ENCODE measurements at regions of chr2 and their contacts with region 1.

Region 1: GRCh38 chr2:6443061-6443823 is 422.5 kb downstream of the CMPK2 start:
- DNase-seq: no peak
- ATAC-seq: no peak
- H3K4me3 ChIP-seq: no peak overlapping the region
- H3K27ac ChIP-seq: no peak overlapping the region
- H3K4me1 ChIP-seq: no peaks in the 10 kb centered on the region
- H3K27me3 ChIP-seq: no peaks in the 10 kb centered on the region

Region 2: DNA sequence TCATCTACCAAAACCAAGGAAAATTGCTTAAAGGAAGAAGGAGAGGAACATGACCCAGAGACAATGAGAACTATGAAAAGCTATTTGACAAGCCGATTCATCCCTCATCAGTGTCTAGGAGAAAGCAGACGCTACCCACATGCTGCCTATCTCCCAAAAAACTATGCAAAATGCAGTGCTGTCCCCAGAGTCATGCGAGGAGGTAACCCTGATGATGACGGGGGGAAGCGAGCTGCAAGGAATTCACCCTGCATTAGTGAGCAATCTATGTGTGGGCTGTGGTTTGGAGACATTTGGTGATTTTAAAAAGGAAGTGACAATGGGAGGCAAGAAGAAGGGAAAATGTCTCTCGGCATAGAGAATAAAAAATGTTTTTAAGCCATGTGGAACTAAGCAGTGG is 50.3 kb before region 1 on chr2:
- intact Hi-C with region 1: no loop called
- DNase-seq: no peak
- ATAC-seq: no peak
- H3K4me3 ChIP-seq: no peak overlapping the region
- H3K27ac ChIP-seq: no peak overlapping the region
- H3K4me1 ChIP-seq: no peaks in the 10 kb centered on the region
- H3K27me3 ChIP-seq: no peaks in the 10 kb centered on the region

Region 3: GRCh38 chr2:6423157-6423556 is 20.1 kb before region 1 on chr2:
- intact Hi-C with region 1: loop called in 1 of 2 experiments (anchors 1 kb)
- DNase-seq: no peak
- ATAC-seq: no peak
- H3K4me3 ChIP-seq: no peak overlapping the region
- H3K27ac ChIP-seq: no peak overlapping the region
- H3K4me1 ChIP-seq: no peaks in the 10 kb centered on the region
- H3K27me3 ChIP-seq: peaks cover 0 to 1% of the 10 kb centered on the region in 2 donors

Region 4: GRCh38 chr2:6492573-6492972 is 49.3 kb after region 1 on chr2:
- intact Hi-C with region 1: no loop called
- DNase-seq: no peak
- ATAC-seq: no peak
- H3K4me3 ChIP-seq: no peak overlapping the region
- H3K27ac ChIP-seq: no peak overlapping the region
- H3K4me1 ChIP-seq: no peaks in the 10 kb centered on the region
- H3K27me3 ChIP-seq: no peaks in the 10 kb centered on the region

Region 5: DNA sequence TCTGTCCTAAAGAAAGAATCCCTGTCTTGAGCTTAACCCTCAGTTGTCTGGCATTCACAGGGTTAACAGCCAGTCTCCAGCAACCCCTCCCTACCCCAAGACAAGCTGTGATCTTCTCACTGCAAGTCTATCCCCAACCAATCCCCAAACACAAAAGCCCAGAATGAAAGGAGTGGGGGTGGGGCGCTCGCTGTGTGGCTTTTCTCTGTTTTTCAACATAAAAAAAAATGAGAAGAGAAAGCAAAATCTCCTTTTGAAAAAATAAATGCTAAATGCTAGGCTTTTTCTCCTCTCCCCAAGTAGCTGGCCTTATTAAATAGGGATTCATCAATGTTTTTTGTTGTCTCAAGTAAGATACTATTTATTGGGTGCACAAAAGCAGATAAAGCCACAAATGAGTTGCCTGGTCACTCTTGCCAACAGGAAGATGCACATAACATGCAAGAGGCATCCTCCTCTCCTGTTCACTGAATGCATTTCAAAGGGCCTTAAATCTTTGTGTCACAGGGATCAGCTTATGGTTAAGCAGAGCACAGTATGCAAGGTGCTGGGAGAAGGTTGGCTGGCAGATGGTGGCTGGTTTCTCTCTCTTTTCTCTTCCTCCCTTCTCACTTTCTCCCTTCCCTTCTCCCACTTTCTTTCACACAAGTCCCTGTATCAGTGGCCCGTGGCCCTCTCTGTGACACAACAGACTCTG is 196.8 kb after region 1 on chr2:
- intact Hi-C with region 1: no loop called
- DNase-seq: no peak
- ATAC-seq: no peak
- H3K4me3 ChIP-seq: no peak overlapping the region
- H3K27ac ChIP-seq: no peak overlapping the region
- H3K4me1 ChIP-seq: peaks cover 0 to 2% of the 10 kb centered on the region in 2 donors
- H3K27me3 ChIP-seq: no peaks in the 10 kb centered on the region